ENCODE measurements at regions of chr6 and their contacts with region 1.

Region 1: DNA sequence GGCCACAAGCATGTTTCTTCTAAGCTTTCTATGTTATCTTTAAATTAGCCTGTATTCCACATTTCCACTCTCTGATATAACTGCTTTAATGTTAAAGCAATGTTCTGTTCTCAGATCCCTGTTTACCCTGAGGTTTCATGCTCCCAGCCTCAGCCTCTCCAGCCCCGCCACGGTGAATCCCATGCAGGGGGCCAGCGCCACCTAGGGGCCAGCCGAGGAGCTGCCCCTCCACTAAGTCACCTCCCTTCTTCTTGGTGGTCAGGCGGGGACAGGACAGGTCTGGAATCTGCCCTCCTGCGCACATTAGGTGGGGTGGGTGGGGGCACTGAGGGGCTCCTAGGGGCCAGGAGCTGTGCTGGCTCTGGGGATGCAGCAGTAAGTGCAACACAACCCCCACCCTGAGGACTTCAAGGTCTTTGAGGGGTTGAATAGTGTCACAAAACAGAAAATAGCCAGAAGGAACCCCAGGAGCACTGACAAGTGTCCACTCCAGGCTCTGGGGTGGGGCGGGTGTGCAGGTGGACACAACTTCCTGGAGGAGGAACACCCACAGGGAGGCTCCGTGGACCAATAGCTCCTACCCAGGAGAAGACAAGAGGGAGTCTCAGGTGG is 61.6 kb downstream of the RAB44 start:
- DNase-seq: peak; percentile 88
- ATAC-seq: peak; percentile 55
- H3K4me3 ChIP-seq: no peak overlapping the region
- H3K4me3 Mint-ChIP-seq: peak overlapping the region; percentile 66
- H3K27ac ChIP-seq: peak overlapping the region; percentile 32 to 95
- H3K27ac Mint-ChIP-seq: peak overlapping the region; percentile 85
- H3K4me1 ChIP-seq: peaks cover 48 to 61% of the 10 kb centered on the region in 2 donors
- H3K4me1 Mint-ChIP-seq: peaks cover 56% of the 10 kb centered on the region
- H3K27me3 ChIP-seq: no peaks in the 10 kb centered on the region
- H3K27me3 Mint-ChIP-seq: no peaks in the 10 kb centered on the region
- CTCF ChIP-seq: peak; percentile 96

Region 2: GRCh38 chr6:36340618-36341454 is 418.4 kb before region 1 on chr6:
- CTCF ChIA-PET with region 1: interaction called, 10 read pairs
- POLR2A ChIA-PET with region 1: interaction called, 3 read pairs
- intact Hi-C with region 1: no loop called
- DNase-seq: peak; percentile 77
- ATAC-seq: peak; percentile 84
- H3K4me3 ChIP-seq: peak overlapping the region in 3 of 5 experiments; percentile 11 to 43 (median 27)
- H3K4me3 Mint-ChIP-seq: peak overlapping the region; percentile 84
- H3K27ac ChIP-seq: no peak overlapping the region
- H3K27ac Mint-ChIP-seq: peak overlapping the region; percentile 70
- H3K4me1 ChIP-seq: peaks cover 15 to 26% of the 10 kb centered on the region in 2 donors
- H3K4me1 Mint-ChIP-seq: peaks cover 18% of the 10 kb centered on the region
- H3K27me3 ChIP-seq: peaks cover 0 to 7% (median 0%) of the 10 kb centered on the region in 4 experiments
- H3K27me3 Mint-ChIP-seq: peaks cover 15% of the 10 kb centered on the region
- CTCF ChIP-seq: peak; percentile 99

Region 3: GRCh38 chr6:36607683-36608386 is 151.4 kb before region 1 on chr6:
- CTCF ChIA-PET with region 1: interaction called, 215 read pairs
- POLR2A ChIA-PET with region 1: interaction called, 3 read pairs
- intact Hi-C with region 1: no loop called
- DNase-seq: no peak
- ATAC-seq: no peak
- H3K4me3 ChIP-seq: no peak overlapping the region
- H3K4me3 Mint-ChIP-seq: no peak overlapping the region
- H3K27ac ChIP-seq: peak overlapping the region in 1 of 2 donors; percentile 24
- H3K27ac Mint-ChIP-seq: peak overlapping the region; percentile 64
- H3K4me1 ChIP-seq: peaks cover 8 to 12% of the 10 kb centered on the region in 2 donors
- H3K4me1 Mint-ChIP-seq: peaks cover 58% of the 10 kb centered on the region
- H3K27me3 ChIP-seq: no peaks in the 10 kb centered on the region
- H3K27me3 Mint-ChIP-seq: no peaks in the 10 kb centered on the region
- CTCF ChIP-seq: no peak

Region 4: DNA sequence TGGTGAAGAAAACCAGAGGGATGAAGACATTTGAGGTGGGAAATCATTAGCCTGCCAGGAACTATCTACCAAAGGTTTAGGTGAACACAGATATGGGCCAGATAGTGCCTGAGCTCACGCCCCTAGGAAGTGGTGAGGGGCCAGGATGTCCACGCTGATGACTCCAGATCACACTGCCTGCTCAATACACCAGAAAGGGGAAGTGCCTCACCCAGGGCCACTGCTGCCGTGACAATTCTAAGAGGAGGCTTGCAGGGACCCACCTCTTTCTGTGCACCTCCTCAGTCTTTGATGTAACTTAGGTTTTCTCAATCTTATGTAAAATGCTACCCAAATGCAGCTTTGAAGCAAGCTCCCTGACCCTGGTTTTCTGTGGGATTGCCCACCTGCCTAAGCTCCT is 67.0 kb before region 1 on chr6:
- CTCF ChIA-PET with region 1: interaction called, 17 read pairs
- POLR2A ChIA-PET with region 1: interaction called, 4 read pairs
- intact Hi-C with region 1: no loop called
- DNase-seq: peak; percentile 86
- ATAC-seq: peak; percentile 98
- H3K4me3 ChIP-seq: peak overlapping the region in 3 of 5 experiments; percentile 12 to 18 (median 16)
- H3K4me3 Mint-ChIP-seq: peak overlapping the region; percentile 75
- H3K27ac ChIP-seq: peak overlapping the region; percentile 90 to 96
- H3K27ac Mint-ChIP-seq: peak overlapping the region; percentile 97
- H3K4me1 ChIP-seq: peaks cover 76 to 81% of the 10 kb centered on the region in 2 donors
- H3K4me1 Mint-ChIP-seq: peaks cover 81% of the 10 kb centered on the region
- H3K27me3 ChIP-seq: no peaks in the 10 kb centered on the region
- H3K27me3 Mint-ChIP-seq: no peaks in the 10 kb centered on the region
- CTCF ChIP-seq: no peak

Region 5: GRCh38 chr6:36772397-36772796 is 13.1 kb after region 1 on chr6:
- CTCF ChIA-PET with region 1: interaction called, 33 read pairs
- POLR2A ChIA-PET with region 1: interaction called, 6 read pairs
- intact Hi-C with region 1: no loop called
- DNase-seq: no peak
- ATAC-seq: no peak
- H3K4me3 ChIP-seq: no peak overlapping the region
- H3K4me3 Mint-ChIP-seq: no peak overlapping the region
- H3K27ac ChIP-seq: no peak overlapping the region
- H3K27ac Mint-ChIP-seq: no peak overlapping the region
- H3K4me1 ChIP-seq: peaks cover 25 to 27% of the 10 kb centered on the region in 2 donors
- H3K4me1 Mint-ChIP-seq: peaks cover 24% of the 10 kb centered on the region
- H3K27me3 ChIP-seq: peaks cover 0 to 9% (median under 1%) of the 10 kb centered on the region in 4 experiments
- H3K27me3 Mint-ChIP-seq: peaks cover 24% of the 10 kb centered on the region
- CTCF ChIP-seq: no peak